ENCODE measurements at regions of chr11 and their contacts with region 1.

Region 1: GRCh38 chr11:61446211-61446651 is 16.3 kb downstream of the SDHAF2 start:
- DNase-seq: peak; percentile 85 to 92 (median 88)
- H3K4me3 ChIP-seq: no peak overlapping the region
- H3K27ac ChIP-seq: no peak overlapping the region
- H3K4me1 ChIP-seq: peaks cover 0 to 4% (median 2%) of the 10 kb centered on the region in 4 experiments
- H3K27me3 ChIP-seq: no peaks in the 10 kb centered on the region

Region 2: DNA sequence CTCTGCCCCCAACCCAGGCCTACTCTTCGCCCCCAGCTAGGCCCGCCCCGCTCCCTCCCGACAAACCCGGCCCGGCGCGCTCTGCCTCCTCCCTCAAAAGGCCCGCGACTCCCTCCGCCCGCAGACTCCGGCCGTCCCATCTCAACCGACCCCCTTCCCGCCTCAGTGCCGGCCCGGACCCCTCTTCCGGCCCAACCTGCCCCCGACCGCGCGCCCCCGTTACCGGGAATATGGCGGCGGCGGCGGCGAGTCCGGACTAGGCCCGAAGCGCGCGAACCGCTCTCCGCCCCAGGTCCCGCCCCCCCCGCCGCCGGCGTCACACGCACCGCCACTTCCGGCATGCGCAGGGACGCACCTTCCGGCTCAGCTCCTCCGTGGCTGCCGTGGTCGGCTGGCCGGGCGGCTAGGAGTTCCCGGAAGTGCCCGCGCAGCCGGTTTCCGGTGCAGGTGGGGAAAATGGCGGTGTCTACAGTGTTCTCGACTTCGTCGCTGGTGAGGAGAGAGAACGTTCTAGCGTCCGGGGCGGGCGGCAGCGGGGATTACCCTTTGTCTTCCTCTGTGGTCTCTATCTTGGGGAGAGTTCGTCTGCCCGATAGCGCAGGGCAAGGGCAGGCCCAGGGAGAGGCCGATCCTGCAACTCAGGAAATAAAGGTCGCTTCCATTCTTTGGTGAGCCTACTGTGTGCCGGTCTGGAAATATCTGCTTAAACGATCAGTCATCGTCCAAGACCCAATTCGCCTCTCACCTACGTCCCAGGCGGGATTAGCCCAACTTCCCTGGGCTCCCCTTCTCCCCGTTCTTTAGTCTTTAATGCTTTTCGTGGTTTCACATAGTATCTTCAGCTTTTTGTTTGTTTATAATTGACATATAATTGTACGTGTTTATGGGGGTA is 16.3 kb before region 1 on chr11 and contains the starts of genes CPSF7 and SDHAF2:
- CTCF ChIA-PET with region 1: interaction called, 105 read pairs
- POLR2A ChIA-PET with region 1: interaction called, 12 read pairs
- DNase-seq: peak; percentile 96 to 99 (median 98)
- H3K4me3 ChIP-seq: peak within 1 kb of the TSS; percentile 49 to 100 (median 88)
- H3K27ac ChIP-seq: peak within 1 kb of the TSS; percentile 97 to 98
- H3K4me1 ChIP-seq: peaks cover 10 to 28% (median 19%) of the 10 kb centered on the region in 4 experiments
- H3K27me3 ChIP-seq: no peaks in the 10 kb centered on the region

Region 3: GRCh38 chr11:61477727-61478148 is 31.5 kb after region 1 on chr11:
- CTCF ChIA-PET with region 1: interaction called, 19 read pairs
- POLR2A ChIA-PET with region 1: no interaction called
- DNase-seq: peak; percentile 27 to 49 (median 46)
- H3K4me3 ChIP-seq: no peak overlapping the region
- H3K27ac ChIP-seq: no peak overlapping the region
- H3K4me1 ChIP-seq: peaks cover 0 to 7% (median 0%) of the 10 kb centered on the region in 4 experiments
- H3K27me3 ChIP-seq: peaks cover 0 to 5% (median 0%) of the 10 kb centered on the region in 5 experiments

Region 4: GRCh38 chr11:61516675-61517572 is 70.7 kb after region 1 on chr11:
- CTCF ChIA-PET with region 1: interaction called, 149 read pairs
- POLR2A ChIA-PET with region 1: interaction called, 3 read pairs
- DNase-seq: peak; percentile 39 to 61 (median 60)
- H3K4me3 ChIP-seq: peak overlapping the region in 4 of 7 experiments; percentile 29 to 71 (median 42)
- H3K27ac ChIP-seq: no peak overlapping the region
- H3K4me1 ChIP-seq: peaks cover 0 to 12% (median 9%) of the 10 kb centered on the region in 4 experiments
- H3K27me3 ChIP-seq: peaks cover 0 to 8% (median 6%) of the 10 kb centered on the region in 5 experiments

Region 5: GRCh38 chr11:61526956-61527731 is 80.9 kb after region 1 on chr11:
- CTCF ChIA-PET with region 1: interaction called, 21 read pairs
- POLR2A ChIA-PET with region 1: no interaction called
- DNase-seq: no peak
- H3K4me3 ChIP-seq: no peak overlapping the region
- H3K27ac ChIP-seq: no peak overlapping the region
- H3K4me1 ChIP-seq: peaks cover 0 to 2% (median 0%) of the 10 kb centered on the region in 4 experiments
- H3K27me3 ChIP-seq: peaks cover 0 to 57% (median 2%) of the 10 kb centered on the region in 5 experiments